ENCODE measurements at regions of chr16 and their contacts with region 1.

Region 1: DNA sequence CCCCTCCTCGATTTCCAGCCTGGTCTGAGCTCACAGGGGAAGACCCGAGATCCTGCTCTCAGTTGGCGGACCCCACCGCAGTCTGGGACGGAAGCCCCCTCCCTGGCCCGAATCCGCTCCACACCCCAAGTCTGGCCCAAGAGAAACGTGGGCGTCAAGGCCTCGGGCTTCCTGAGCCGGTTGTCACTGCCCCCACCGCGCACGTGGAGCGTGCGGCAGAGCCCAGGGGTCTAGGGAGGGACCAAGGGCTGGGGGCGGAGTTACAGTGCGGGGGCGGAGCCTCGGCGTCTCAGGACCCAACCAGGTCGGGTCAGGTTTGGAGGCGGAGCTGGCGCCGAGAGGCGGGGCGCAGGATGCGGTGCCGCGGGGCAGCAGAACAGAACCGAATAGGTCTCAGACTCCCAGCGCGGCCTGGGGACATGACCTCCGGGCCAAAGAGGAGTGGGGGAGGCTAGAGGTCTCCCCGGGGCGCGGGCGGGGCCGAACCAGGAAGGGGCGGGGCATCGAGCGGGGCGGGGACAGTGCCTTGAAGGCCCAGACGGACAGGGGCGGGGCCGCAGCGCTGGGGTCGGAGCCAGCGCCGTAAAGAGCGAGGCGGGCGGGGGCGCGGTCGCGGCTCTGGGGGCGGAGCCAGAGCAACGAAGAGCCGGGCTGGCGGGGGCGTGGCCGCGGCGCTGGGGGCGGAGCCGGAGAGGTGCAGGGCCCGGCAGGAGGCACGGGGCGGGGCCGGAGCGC is 431 bp upstream of the ZFPM1 start:
- DNase-seq: peak; percentile 95 to 100 (median 99)
- ATAC-seq: peak; percentile 71
- H3K4me3 ChIP-seq: peak overlapping the region; percentile 65
- H3K4me3 Mint-ChIP-seq: peak overlapping the region; percentile 90
- H3K27ac ChIP-seq: peak overlapping the region in 1 of 2 donors; percentile 48
- H3K27ac Mint-ChIP-seq: peak overlapping the region; percentile 90
- H3K4me1 ChIP-seq: peaks cover 43% of the 10 kb centered on the region
- H3K4me1 Mint-ChIP-seq: peaks cover 24% of the 10 kb centered on the region
- H3K27me3 ChIP-seq: no peaks in the 10 kb centered on the region
- H3K27me3 Mint-ChIP-seq: no peaks in the 10 kb centered on the region
- CTCF ChIP-seq: no peak

Region 2: DNA sequence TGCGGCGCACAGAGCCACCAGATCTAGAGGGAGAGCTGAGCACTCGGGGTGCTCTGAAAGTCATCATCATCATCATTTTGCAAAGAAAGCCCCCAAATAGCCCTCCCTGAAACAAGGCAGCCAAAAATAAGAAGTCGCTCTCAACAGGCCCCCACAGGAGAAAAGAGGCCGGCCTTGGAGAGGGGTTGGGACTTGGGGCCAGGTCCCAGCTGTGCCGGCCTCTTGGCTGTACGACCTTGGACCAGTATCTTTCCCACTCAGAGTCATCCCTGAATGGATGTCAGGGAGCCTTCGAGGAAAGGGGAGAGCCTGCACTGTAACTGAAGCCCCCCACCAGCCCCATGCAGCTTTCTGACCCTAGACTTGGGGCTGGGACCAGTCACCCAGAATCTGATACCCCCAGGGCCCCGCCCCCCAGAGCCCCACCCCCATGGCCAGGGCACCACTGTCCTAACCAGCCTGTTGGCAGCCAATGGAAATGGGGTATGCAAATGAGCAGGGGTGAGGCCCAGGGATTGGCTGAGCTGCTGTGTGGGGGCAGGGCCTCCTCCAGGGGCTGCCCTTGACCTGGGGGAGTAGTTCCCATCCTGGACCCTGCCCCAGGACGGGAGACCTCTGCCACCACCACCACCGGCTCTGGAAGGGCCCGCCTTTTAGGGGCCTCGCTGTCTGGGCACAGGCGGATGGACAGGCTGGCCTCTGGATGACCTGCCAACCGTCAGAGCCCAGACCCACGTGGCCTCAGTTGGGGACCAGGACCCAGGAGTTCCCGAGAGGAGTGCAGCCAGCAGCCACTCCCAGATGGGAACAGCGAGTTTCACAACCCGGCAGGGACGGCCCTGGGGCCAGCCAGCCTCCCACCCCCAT is 15.9 kb after region 1 on chr16:
- CTCF ChIA-PET with region 1: no interaction called
- POLR2A ChIA-PET with region 1: interaction called, 16 read pairs
- intact Hi-C with region 1: loop called in 1 of 2 experiments (anchors 1 kb)
- DNase-seq: peak in 3 of 14 experiments; percentile 24 to 59 (median 25)
- ATAC-seq: peak; percentile 13
- H3K4me3 ChIP-seq: no peak overlapping the region
- H3K4me3 Mint-ChIP-seq: no peak overlapping the region
- H3K27ac ChIP-seq: peak overlapping the region; percentile 24 to 62
- H3K27ac Mint-ChIP-seq: peak overlapping the region; percentile 92
- H3K4me1 ChIP-seq: peaks cover 90% of the 10 kb centered on the region
- H3K4me1 Mint-ChIP-seq: peaks cover 66% of the 10 kb centered on the region
- H3K27me3 ChIP-seq: no peaks in the 10 kb centered on the region
- H3K27me3 Mint-ChIP-seq: no peaks in the 10 kb centered on the region
- CTCF ChIP-seq: no peak

Region 3: DNA sequence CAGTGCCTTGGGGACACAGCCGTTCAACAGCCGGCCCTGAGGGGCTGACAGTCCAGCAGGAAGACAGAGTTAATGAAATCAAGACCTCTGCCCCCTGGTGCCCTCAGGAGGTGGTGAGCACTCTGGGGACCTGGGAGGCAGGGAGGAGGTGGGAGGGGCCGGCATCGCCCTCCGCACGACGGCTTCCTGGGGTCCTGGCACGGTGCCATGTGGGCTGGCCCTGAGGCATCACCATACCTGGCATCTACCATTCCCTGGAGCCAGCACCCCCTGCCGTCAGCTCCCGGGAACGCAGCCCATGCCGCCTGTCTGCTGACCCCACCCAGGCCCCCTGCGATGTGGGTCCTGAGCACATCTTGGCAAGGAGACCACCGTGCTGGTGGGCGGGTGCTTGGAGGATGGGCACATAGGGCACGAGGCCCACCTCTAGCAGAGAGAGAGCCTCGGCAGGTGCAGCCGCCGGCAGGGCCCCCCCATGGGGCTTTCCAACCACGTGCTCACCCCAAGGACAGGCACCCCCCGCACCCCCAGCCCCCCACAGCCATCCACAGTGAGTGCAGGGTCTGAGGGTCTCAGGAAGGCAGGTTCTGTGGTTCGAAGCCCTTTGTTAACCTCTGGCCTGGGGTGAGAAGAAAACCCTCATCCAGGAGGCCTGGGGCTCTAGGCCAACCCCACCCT is 52.9 kb after region 1 on chr16:
- CTCF ChIA-PET with region 1: no interaction called
- POLR2A ChIA-PET with region 1: no interaction called
- intact Hi-C with region 1: no loop called
- DNase-seq: peak; percentile 32 to 86 (median 66)
- ATAC-seq: peak; percentile 88
- H3K4me3 ChIP-seq: no peak overlapping the region
- H3K4me3 Mint-ChIP-seq: no peak overlapping the region
- H3K27ac ChIP-seq: no peak overlapping the region
- H3K27ac Mint-ChIP-seq: peak overlapping the region; percentile 36
- H3K4me1 ChIP-seq: peaks cover 12% of the 10 kb centered on the region
- H3K4me1 Mint-ChIP-seq: peaks cover 5% of the 10 kb centered on the region
- H3K27me3 ChIP-seq: no peaks in the 10 kb centered on the region
- H3K27me3 Mint-ChIP-seq: no peaks in the 10 kb centered on the region
- CTCF ChIP-seq: peak; percentile 35

Region 4: GRCh38 chr16:88533932-88534732 is 81.5 kb after region 1 on chr16:
- CTCF ChIA-PET with region 1: no interaction called
- POLR2A ChIA-PET with region 1: interaction called, 7 read pairs
- intact Hi-C with region 1: loop called in 1 of 2 experiments (anchors 1 kb)
- DNase-seq: peak; percentile 60 to 90 (median 77)
- ATAC-seq: peak; percentile 79
- H3K4me3 ChIP-seq: peak overlapping the region; percentile 25
- H3K4me3 Mint-ChIP-seq: no peak overlapping the region
- H3K27ac ChIP-seq: no peak overlapping the region
- H3K27ac Mint-ChIP-seq: peak overlapping the region; percentile 68
- H3K4me1 ChIP-seq: peaks cover 10% of the 10 kb centered on the region
- H3K4me1 Mint-ChIP-seq: peaks cover 11% of the 10 kb centered on the region
- H3K27me3 ChIP-seq: peaks cover 0 to under 1% of the 10 kb centered on the region in 2 experiments
- H3K27me3 Mint-ChIP-seq: no peaks in the 10 kb centered on the region
- CTCF ChIP-seq: no peak

Region 5: DNA sequence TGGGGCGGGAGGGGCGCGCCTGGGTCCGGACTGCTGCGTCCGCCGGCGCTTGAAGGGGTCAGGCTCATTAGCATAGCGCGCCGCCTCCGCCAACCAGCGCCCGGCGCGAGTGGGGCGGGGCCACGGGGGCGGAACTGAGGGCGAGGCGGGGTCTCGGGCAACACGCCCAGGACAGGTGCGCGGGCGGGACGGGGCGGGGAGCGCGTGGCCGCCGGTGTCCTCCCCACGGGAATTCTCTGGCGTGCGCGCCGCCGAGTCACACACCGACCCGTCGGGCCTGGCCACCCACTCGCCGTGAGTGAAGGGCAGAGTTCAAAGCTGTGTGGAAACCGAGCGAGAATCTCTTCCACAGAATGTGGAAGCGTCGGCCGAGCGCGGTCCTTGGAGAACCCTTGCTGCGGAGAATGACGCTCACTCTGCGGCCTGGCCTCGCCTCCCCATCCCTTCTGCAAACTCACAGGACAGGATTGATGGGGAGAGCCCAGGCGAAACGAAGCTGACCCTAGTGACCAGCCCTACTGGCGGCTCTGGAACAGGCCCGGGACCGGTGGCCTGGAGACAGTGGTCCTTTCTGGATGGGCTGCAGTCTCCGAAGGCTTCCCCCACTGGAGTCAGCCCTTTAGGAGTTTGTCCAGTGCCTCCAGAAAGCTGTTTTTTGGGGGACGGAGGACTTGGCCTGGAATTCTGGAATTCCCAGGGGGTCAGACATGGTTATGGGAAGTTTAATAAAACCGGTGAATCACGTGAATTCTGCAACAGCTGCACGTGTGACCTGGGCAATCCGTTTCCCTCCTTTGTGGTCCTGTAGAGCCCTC is 234.0 kb after region 1 on chr16 and contains the start of gene SNAI3:
- CTCF ChIA-PET with region 1: no interaction called
- POLR2A ChIA-PET with region 1: no interaction called
- intact Hi-C with region 1: loop called in 1 of 2 experiments (anchors 5 kb)
- DNase-seq: peak; percentile 63 to 90 (median 80)
- ATAC-seq: peak; percentile 78
- H3K4me3 ChIP-seq: peak within 1 kb of the TSS; percentile 77
- H3K4me3 Mint-ChIP-seq: peak within 1 kb of the TSS; percentile 87
- H3K27ac ChIP-seq: peak within 1 kb of the TSS; percentile 29 to 56
- H3K27ac Mint-ChIP-seq: peak within 1 kb of the TSS; percentile 80
- H3K4me1 ChIP-seq: peaks cover 80% of the 10 kb centered on the region
- H3K4me1 Mint-ChIP-seq: peaks cover 58% of the 10 kb centered on the region
- H3K27me3 ChIP-seq: no peaks in the 10 kb centered on the region
- H3K27me3 Mint-ChIP-seq: no peaks in the 10 kb centered on the region
- CTCF ChIP-seq: no peak
- total RNA-seq, gene SNAI3: 3.0 to 3.5 TPM

Region 6: GRCh38 chr16:88856828-88857733 is 404.4 kb after region 1 on chr16 and contains the starts of genes GALNS and TRAPPC2L:
- CTCF ChIA-PET with region 1: no interaction called
- POLR2A ChIA-PET with region 1: no interaction called
- intact Hi-C with region 1: loop called in 1 of 2 experiments (anchors 5 kb)
- DNase-seq: peak; percentile 97 to 99 (median 98)
- ATAC-seq: peak; percentile 90
- H3K4me3 ChIP-seq: peak within 1 kb of the TSS; percentile 100
- H3K4me3 Mint-ChIP-seq: peak within 1 kb of the TSS; percentile 100
- H3K27ac ChIP-seq: peak within 1 kb of the TSS; percentile 69 to 74
- H3K27ac Mint-ChIP-seq: peak within 1 kb of the TSS; percentile 99
- H3K4me1 ChIP-seq: peaks cover 47% of the 10 kb centered on the region
- H3K4me1 Mint-ChIP-seq: peaks cover 27% of the 10 kb centered on the region
- H3K27me3 ChIP-seq: no peaks in the 10 kb centered on the region
- H3K27me3 Mint-ChIP-seq: peaks cover 3% of the 10 kb centered on the region
- CTCF ChIP-seq: no peak
- total RNA-seq, gene GALNS: 18.4 to 19.7 TPM
- total RNA-seq, gene TRAPPC2L: 48.0 to 48.2 TPM